ENCODE measurements at regions of chr15 and their contacts with region 1.

Region 1: GRCh38 chr15:36529296-36530011 is 50.0 kb upstream of the CDIN1 start:
- DNase-seq: no peak
- ATAC-seq: no peak
- H3K4me3 ChIP-seq: no peak overlapping the region
- H3K27ac ChIP-seq: no peak overlapping the region
- H3K4me1 ChIP-seq: no peaks in the 10 kb centered on the region
- H3K27me3 ChIP-seq: no peaks in the 10 kb centered on the region
- CTCF ChIP-seq: no peak
- POLR2A ChIP-seq: no peak

Region 2: DNA sequence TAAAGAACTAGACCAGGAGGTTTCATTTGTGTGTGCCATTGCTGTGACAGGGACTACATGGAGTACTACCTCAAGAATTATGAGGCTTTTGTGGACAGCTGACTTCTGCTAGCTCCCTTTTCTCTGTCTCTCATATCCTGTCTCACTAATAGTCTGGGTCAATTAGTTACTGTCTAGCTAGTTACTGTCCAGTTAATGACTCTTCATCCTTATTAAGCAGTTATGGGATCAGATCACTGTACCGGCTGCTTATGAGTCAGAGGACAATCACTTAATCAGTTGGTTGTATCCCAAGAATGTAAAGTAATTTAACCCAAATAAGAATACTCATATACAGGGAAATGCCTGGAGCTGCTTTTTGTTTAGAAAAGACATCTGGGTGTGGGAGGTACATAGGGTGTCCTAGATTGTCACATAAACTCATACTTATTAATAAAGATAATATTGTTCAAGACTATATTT is 208.0 kb after region 1 on chr15:
- intact Hi-C with region 1: loop called in 1 of 10 experiments (anchors 10 kb)
- DNase-seq: no peak
- ATAC-seq: peak in 1 of 4 donors; percentile 21
- H3K4me3 ChIP-seq: no peak overlapping the region
- H3K27ac ChIP-seq: no peak overlapping the region
- H3K4me1 ChIP-seq: peaks cover 0 to 15% (median 0%) of the 10 kb centered on the region in 12 donors
- H3K27me3 ChIP-seq: no peaks in the 10 kb centered on the region
- CTCF ChIP-seq: no peak
- POLR2A ChIP-seq: no peak

Region 3: DNA sequence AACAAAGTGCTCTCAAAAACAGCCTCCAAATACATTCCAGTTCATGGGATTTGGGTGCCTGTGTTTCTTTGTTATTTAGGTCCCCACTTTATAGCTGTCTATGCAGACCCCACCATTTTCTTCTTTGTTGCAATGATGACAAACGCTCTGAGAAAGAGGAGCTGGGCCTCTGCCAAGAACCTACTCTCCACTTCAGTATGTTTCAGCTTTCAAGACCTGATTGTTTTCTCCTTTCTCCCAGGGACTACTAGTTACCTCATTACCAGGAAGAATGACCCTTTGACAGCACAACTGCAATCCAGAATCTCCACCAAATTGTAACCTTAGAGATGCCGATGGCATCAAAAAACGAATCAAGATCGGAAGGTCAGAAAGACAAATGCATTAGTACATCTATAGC is 334.1 kb after region 1 on chr15:
- intact Hi-C with region 1: loop called in 1 of 10 experiments (anchors 10 kb)
- DNase-seq: no peak
- ATAC-seq: no peak
- H3K4me3 ChIP-seq: no peak overlapping the region
- H3K27ac ChIP-seq: no peak overlapping the region
- H3K4me1 ChIP-seq: no peaks in the 10 kb centered on the region
- H3K27me3 ChIP-seq: no peaks in the 10 kb centered on the region
- CTCF ChIP-seq: no peak
- POLR2A ChIP-seq: no peak